Posterior vena cava (tissue), 2 donors: ENCODE measurements at regions of chr3 and their contacts with region 1.

Region 1: GRCh38 chr3:127546970-127547733 is 43.4 kb downstream of the TPRA1 start:
- DNase-seq: peak; percentile 76

Region 2: DNA sequence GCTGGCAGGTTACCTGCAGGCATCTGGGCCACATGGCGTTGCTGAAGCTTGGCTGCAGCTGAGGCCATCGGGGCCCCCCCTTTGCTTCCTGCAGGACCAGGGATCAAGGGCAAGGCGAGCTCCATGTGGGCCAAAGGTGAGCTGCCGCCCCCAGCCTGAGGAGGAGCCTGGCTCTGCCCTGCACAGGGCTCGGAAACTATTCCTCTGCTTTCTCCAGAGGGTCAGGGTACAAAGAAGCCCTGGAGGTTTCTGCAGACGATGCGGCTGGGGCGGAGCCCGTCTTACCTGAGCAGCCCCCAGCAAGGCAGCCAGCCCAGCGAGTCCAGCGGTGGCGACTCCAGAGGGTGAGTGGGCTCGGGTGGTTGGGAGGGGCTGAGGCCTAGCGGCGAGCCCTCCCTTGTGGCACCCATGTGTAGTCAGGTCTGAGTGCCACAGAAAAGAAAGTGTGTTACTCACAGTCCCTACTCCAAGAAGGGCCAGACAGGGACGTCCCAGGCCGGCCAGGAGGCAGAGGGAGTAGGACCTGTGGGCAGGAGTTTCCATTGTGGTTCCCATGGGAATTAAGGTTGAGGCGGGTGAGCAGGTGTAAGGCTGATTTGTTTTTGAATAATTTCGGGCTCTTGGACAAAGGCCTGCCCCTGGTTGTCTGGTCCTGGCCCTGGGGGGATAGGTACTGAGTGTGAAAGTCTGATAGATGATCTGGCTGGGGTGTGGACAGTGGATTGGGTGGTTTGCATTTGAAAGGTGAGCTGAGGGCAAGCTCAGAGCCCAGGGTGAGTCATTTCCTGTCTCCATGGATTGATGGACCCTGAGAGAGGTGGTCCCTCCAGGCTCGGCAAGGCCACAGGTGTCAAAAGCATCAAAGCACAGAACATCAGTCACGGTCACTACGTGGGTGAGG is 1127.0 kb before region 1 on chr3:
- intact Hi-C with region 1: loop called in 1 of 2 experiments (anchors 5 kb)
- DNase-seq: peak; percentile 81

Region 3: GRCh38 chr3:126679318-126679751 is 867.8 kb before region 1 on chr3:
- intact Hi-C with region 1: loop called in 1 of 2 experiments (anchors 1 kb)
- DNase-seq: peak; percentile 94